Calu3 (cell line): ENCODE measurements at regions of chr1 and their contacts with region 1.

Region 1: GRCh38 chr1:214476958-214477870 is 74.2 kb downstream of the PTPN14 start:
- DNase-seq: peak; percentile 30
- H3K4me3 Mint-ChIP-seq: peak overlapping the region; percentile 47
- H3K27ac Mint-ChIP-seq: peak overlapping the region; percentile 74
- H3K4me1 Mint-ChIP-seq: peaks cover 60% of the 10 kb centered on the region
- H3K27me3 Mint-ChIP-seq: no peaks in the 10 kb centered on the region
- CTCF ChIP-seq: no peak

Region 2: GRCh38 chr1:214439352-214440119 is 37.7 kb before region 1 on chr1:
- CTCF ChIA-PET with region 1: interaction called, 6 read pairs
- intact Hi-C with region 1: loop called (anchors 5 kb)
- DNase-seq: peak; percentile 64
- H3K4me3 Mint-ChIP-seq: peak overlapping the region; percentile 53
- H3K27ac Mint-ChIP-seq: peak overlapping the region; percentile 67
- H3K4me1 Mint-ChIP-seq: peaks cover 63% of the 10 kb centered on the region
- H3K27me3 Mint-ChIP-seq: no peaks in the 10 kb centered on the region
- CTCF ChIP-seq: no peak

Region 3: GRCh38 chr1:214446772-214447556 is 30.2 kb before region 1 on chr1:
- CTCF ChIA-PET with region 1: no interaction called
- intact Hi-C with region 1: loop called (anchors 1 kb)
- DNase-seq: peak; percentile 88
- H3K4me3 Mint-ChIP-seq: peak overlapping the region; percentile 47
- H3K27ac Mint-ChIP-seq: peak overlapping the region; percentile 85
- H3K4me1 Mint-ChIP-seq: peaks cover 76% of the 10 kb centered on the region
- H3K27me3 Mint-ChIP-seq: no peaks in the 10 kb centered on the region
- CTCF ChIP-seq: no peak

Region 4: DNA sequence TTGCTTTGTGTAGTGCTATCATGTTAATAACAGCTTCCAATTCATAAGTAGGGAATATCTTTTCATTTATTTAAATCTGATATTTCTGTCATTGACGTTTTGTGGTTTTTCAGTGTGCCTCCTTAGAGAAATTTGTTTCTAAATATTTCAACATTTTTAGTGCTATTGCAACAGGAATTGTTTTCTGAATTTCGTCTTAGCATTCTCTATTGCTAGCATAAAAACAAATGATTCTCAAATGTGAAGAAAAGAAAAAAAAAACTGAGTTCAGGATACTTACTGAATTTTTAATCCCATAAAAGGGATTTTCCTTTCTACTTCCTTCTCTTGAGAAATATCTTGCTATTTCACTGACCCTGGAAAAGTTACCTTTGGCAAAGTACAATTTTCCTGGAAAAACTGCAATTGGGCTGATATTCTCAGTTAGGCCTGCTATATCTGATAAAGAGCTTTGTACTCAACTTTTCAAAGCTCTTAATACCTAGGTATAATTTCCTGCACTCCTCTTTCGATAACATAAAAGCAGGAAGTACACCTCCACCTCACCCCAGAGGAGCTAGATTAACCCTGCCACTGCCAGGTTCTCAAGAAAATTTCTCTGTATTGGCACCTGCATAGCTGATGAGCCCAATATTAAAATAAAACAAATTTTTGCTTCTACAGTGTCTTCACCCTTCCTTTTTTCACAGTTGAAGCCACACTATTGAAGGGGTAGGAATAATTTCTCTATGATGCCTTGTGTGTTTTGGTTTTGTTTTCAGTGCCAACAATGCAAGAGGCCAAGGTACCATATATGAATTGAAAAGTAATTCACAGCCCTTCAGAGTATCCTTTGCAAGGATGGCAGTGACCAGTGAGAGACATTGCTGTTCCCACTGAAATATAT is 38.6 kb after region 1 on chr1:
- CTCF ChIA-PET with region 1: no interaction called
- intact Hi-C with region 1: loop called (anchors 5 kb)
- DNase-seq: no peak
- H3K4me3 Mint-ChIP-seq: peak overlapping the region; percentile 55
- H3K27ac Mint-ChIP-seq: peak overlapping the region; percentile 71
- H3K4me1 Mint-ChIP-seq: peaks cover 70% of the 10 kb centered on the region
- H3K27me3 Mint-ChIP-seq: no peaks in the 10 kb centered on the region
- CTCF ChIP-seq: no peak

Region 5: GRCh38 chr1:214551436-214552173 is 74.4 kb after region 1 on chr1 and contains the start of gene PTPN14:
- CTCF ChIA-PET with region 1: interaction called, 13 read pairs
- intact Hi-C with region 1: loop called (anchors 2 kb)
- DNase-seq: peak; percentile 96
- H3K4me3 Mint-ChIP-seq: peak within 1 kb of the TSS; percentile 78
- H3K27ac Mint-ChIP-seq: peak within 1 kb of the TSS; percentile 86
- H3K4me1 Mint-ChIP-seq: peaks cover 26% of the 10 kb centered on the region
- H3K27me3 Mint-ChIP-seq: no peaks in the 10 kb centered on the region
- CTCF ChIP-seq: peak; percentile 24
- total RNA-seq, gene PTPN14: 72.4 and 77.4 TPM in 2 replicates

Region 6: GRCh38 chr1:214573386-214574358 is 96.5 kb after region 1 on chr1:
- CTCF ChIA-PET with region 1: no interaction called
- intact Hi-C with region 1: loop called (anchors 5 kb)
- DNase-seq: peak; percentile 45
- H3K4me3 Mint-ChIP-seq: peak overlapping the region; percentile 22
- H3K27ac Mint-ChIP-seq: peak overlapping the region; percentile 66
- H3K4me1 Mint-ChIP-seq: peaks cover 56% of the 10 kb centered on the region
- H3K27me3 Mint-ChIP-seq: no peaks in the 10 kb centered on the region
- CTCF ChIP-seq: no peak